ENCODE measurements at regions of chr3 and their contacts with region 1.

Region 1: GRCh38 chr3:143119009-143119914 is at the start of gene CHST2:
- DNase-seq: peak; percentile 87
- ATAC-seq: peak; percentile 88
- H3K4me3 ChIP-seq: peak within 1 kb of the TSS; percentile 75 to 95 (median 91)
- H3K4me3 Mint-ChIP-seq: peak within 1 kb of the TSS; percentile 94
- H3K27ac ChIP-seq: peak within 1 kb of the TSS; percentile 63 to 72
- H3K27ac Mint-ChIP-seq: peak within 1 kb of the TSS; percentile 95
- H3K4me1 ChIP-seq: peaks cover 25 to 32% of the 10 kb centered on the region in 2 donors
- H3K4me1 Mint-ChIP-seq: peaks cover 31% of the 10 kb centered on the region
- H3K27me3 ChIP-seq: peaks cover 0 to 3% (median 0%) of the 10 kb centered on the region in 4 experiments
- H3K27me3 Mint-ChIP-seq: no peaks in the 10 kb centered on the region
- CTCF ChIP-seq: no peak
- total RNA-seq, gene CHST2: 24.8 and 25.0 TPM in 2 replicates

Region 2: GRCh38 chr3:143001369-143002082 is 117.7 kb before region 1 on chr3 and contains the start of gene U2SURP:
- CTCF ChIA-PET with region 1: interaction called, 3 read pairs
- POLR2A ChIA-PET with region 1: no interaction called
- intact Hi-C with region 1: loop called (anchors 1 kb)
- DNase-seq: peak; percentile 95
- ATAC-seq: peak; percentile 96
- H3K4me3 ChIP-seq: peak within 1 kb of the TSS; percentile 73 to 100 (median 97)
- H3K4me3 Mint-ChIP-seq: peak within 1 kb of the TSS; percentile 96
- H3K27ac ChIP-seq: peak within 1 kb of the TSS; percentile 86 to 98
- H3K27ac Mint-ChIP-seq: peak within 1 kb of the TSS; percentile 96
- H3K4me1 ChIP-seq: peaks cover 19 to 20% of the 10 kb centered on the region in 2 donors
- H3K4me1 Mint-ChIP-seq: peaks cover 34% of the 10 kb centered on the region
- H3K27me3 ChIP-seq: no peaks in the 10 kb centered on the region
- H3K27me3 Mint-ChIP-seq: no peaks in the 10 kb centered on the region
- CTCF ChIP-seq: no peak
- total RNA-seq, gene U2SURP: 138 and 169 TPM in 2 replicates

Region 3: DNA sequence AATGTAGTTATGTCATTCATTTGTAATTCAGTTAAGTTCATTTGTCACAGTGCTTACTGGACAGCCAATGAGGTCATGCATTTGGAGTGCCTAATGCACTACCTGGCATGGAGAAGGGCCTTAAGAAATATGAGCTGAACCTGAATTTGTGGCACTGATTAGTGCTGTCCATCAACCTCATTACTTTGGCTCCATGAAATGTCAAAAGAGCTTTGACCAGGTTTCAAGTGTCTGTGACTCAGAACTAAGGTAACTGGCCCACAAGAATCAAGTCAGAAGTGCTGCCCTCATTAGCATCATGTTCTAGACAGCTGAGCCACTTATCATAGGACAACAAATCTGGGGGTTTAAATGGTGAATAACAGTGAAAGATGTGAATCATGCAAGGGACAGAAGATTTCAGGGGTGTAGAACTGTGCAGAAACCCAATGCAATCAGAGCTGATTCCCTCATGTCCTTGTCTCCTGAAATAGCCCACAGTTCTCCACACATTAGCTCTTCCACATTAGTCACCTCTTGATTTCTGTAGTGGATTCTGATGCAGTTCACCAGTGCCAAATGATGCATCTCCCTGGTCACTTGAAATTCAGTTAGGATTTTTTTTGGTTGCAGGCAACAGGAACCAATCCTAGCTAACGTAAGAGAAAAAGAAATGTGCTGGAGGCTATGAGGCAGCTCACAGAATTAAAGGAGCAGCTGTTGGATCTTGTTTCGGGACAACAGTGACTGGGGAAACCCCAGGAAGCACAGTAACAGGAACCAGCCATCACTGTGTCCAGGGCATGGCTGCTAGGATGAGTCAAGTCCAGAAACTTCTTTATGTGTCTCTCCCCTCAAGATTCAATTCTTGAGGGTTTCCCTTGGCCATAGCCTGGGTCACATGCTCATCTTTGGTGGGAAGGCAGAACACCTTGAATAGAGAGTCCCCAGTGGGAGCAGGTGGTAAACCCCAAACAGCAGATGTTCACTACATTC is 39.0 kb after region 1 on chr3:
- CTCF ChIA-PET with region 1: interaction called, 5 read pairs
- POLR2A ChIA-PET with region 1: interaction called, 10 read pairs
- intact Hi-C with region 1: no loop called
- DNase-seq: no peak
- ATAC-seq: no peak
- H3K4me3 ChIP-seq: no peak overlapping the region
- H3K4me3 Mint-ChIP-seq: no peak overlapping the region
- H3K27ac ChIP-seq: no peak overlapping the region
- H3K27ac Mint-ChIP-seq: no peak overlapping the region
- H3K4me1 ChIP-seq: no peaks in the 10 kb centered on the region
- H3K4me1 Mint-ChIP-seq: peaks cover 9% of the 10 kb centered on the region
- H3K27me3 ChIP-seq: peaks cover 0 to 3% (median 0%) of the 10 kb centered on the region in 4 experiments
- H3K27me3 Mint-ChIP-seq: no peaks in the 10 kb centered on the region
- CTCF ChIP-seq: no peak

Region 4: DNA sequence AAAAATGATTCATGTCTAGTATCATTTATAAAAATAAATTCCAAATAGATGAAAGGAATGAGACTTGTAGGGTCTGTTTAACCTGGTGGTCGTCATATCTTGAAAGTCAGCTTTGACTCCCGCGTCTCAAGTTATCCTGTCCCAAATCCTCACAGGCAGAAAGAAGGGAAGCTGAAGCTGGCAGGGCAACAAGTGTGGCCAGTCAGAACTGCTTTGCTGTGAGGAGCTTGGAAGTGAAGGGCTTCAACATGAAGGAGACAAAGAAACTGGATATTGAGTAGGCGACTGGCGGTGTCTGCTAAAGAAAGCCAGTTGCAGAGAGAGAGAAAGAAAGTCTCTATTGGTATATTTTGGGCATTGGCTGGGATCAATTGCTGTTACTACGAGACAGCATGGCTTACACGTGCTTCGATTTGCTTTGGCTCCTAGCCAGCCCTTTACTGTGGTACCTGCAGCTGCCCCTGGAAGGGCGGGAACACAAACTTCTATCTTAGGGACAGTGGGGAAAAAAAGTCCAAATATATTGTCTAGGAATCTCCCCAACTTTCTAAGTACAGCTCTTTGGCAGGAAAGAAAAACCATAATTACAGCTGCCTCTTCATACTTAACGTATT is 107.5 kb after region 1 on chr3:
- CTCF ChIA-PET with region 1: no interaction called
- POLR2A ChIA-PET with region 1: no interaction called
- intact Hi-C with region 1: no loop called
- DNase-seq: no peak
- ATAC-seq: no peak
- H3K4me3 ChIP-seq: no peak overlapping the region
- H3K4me3 Mint-ChIP-seq: no peak overlapping the region
- H3K27ac ChIP-seq: no peak overlapping the region
- H3K27ac Mint-ChIP-seq: no peak overlapping the region
- H3K4me1 ChIP-seq: no peaks in the 10 kb centered on the region
- H3K4me1 Mint-ChIP-seq: no peaks in the 10 kb centered on the region
- H3K27me3 ChIP-seq: no peaks in the 10 kb centered on the region
- H3K27me3 Mint-ChIP-seq: no peaks in the 10 kb centered on the region
- CTCF ChIP-seq: no peak

Region 5: DNA sequence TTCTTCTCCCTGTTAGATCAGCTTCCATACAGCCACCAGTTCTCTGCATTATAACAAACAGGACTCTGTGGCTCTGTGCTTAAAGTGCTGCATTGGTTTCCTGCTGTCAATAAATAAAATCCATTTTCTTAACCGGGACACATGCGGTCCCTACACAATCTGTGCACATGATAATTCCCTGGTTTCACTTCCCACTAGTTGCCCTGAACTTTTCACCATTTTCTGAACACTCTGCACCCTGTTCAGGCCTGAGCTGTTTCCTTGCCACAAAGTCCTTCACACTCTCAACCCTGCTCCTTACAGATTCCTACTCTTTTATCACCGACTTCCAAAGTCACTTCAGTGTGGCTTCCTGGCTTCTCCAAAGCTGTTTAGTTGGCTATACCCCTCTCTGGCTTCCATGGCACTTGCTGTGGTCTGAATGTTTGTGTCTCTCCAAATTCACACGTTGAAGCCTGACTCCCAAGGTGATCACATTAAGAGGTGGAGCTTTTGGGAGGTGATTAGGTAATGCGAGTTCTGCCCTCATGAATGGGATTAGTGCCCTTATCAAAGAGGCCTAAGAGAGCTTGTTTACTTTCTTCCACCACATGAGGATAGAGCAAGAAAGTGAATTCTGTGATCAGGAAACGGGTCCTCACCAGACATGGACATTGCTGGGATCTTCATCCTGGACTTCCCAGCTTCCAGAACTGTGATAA is 233.7 kb after region 1 on chr3:
- CTCF ChIA-PET with region 1: interaction called, 3 read pairs
- POLR2A ChIA-PET with region 1: no interaction called
- intact Hi-C with region 1: loop called (anchors 5 kb)
- DNase-seq: peak; percentile 39
- ATAC-seq: peak; percentile 24
- H3K4me3 ChIP-seq: no peak overlapping the region
- H3K4me3 Mint-ChIP-seq: peak overlapping the region; percentile 34
- H3K27ac ChIP-seq: peak overlapping the region in 1 of 2 donors; percentile 30
- H3K27ac Mint-ChIP-seq: peak overlapping the region; percentile 0
- H3K4me1 ChIP-seq: peaks cover 36% of the 10 kb centered on the region in 2 donors
- H3K4me1 Mint-ChIP-seq: peaks cover 48% of the 10 kb centered on the region
- H3K27me3 ChIP-seq: no peaks in the 10 kb centered on the region
- H3K27me3 Mint-ChIP-seq: no peaks in the 10 kb centered on the region
- CTCF ChIP-seq: no peak

Region 6: GRCh38 chr3:143644370-143645089 is 525.3 kb after region 1 on chr3:
- CTCF ChIA-PET with region 1: interaction called, 7 read pairs
- POLR2A ChIA-PET with region 1: no interaction called
- intact Hi-C with region 1: loop called (anchors 1 kb)
- DNase-seq: peak; percentile 67
- ATAC-seq: peak; percentile 51
- H3K4me3 ChIP-seq: no peak overlapping the region
- H3K4me3 Mint-ChIP-seq: no peak overlapping the region
- H3K27ac ChIP-seq: no peak overlapping the region
- H3K27ac Mint-ChIP-seq: peak overlapping the region; percentile 17
- H3K4me1 ChIP-seq: peaks cover 9 to 10% of the 10 kb centered on the region in 2 donors
- H3K4me1 Mint-ChIP-seq: peaks cover 13% of the 10 kb centered on the region
- H3K27me3 ChIP-seq: no peaks in the 10 kb centered on the region
- H3K27me3 Mint-ChIP-seq: no peaks in the 10 kb centered on the region
- CTCF ChIP-seq: peak; percentile 70